A549 (cell line): ENCODE measurements at regions of chr17 and their contacts with region 1.

Region 1: DNA sequence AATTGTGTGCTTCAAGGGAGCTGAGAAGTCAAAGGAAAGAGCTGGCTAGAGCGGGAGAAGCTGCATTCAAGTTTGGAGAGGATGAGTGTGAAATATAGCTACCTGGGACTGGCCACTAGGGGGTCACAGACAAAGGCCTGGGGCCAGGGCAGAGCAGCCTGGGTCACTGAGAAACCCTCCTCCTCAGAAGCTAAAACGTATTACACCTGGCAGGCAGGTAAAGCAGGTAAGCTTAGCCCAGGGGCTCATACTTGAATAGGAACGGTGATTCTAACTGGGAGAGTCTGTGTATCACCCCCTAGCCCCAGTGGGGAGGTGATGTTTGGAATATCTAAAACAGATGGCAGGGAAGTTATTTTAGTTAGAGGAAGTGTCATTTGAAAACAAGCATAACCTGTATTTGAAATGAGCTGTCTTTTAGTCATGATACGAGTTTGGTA is 6.8 kb downstream of the KRT37 start:
- DNase-seq: peak in 1 of 2 experiments; percentile 67
- ATAC-seq: peak; percentile 62 to 91; a peak in 4 of 6 replicates
- H3K4me3 ChIP-seq: no peak overlapping the region
- H3K27ac ChIP-seq: no peak overlapping the region
- H3K4me1 ChIP-seq: 0 out of 3 replicates have a peak, but pooled peaks cover 4% of the 10 kb centered on the region
- CTCF ChIP-seq: peak; percentile 36; the same call in 2 of the 3 replicates
- EP300 ChIP-seq: no peak
- POLR2A ChIP-seq: no peak
- RAD21 ChIP-seq: peak in 1 of 2 experiments; percentile 50; a peak in 2 of 5 replicates

Region 2: DNA sequence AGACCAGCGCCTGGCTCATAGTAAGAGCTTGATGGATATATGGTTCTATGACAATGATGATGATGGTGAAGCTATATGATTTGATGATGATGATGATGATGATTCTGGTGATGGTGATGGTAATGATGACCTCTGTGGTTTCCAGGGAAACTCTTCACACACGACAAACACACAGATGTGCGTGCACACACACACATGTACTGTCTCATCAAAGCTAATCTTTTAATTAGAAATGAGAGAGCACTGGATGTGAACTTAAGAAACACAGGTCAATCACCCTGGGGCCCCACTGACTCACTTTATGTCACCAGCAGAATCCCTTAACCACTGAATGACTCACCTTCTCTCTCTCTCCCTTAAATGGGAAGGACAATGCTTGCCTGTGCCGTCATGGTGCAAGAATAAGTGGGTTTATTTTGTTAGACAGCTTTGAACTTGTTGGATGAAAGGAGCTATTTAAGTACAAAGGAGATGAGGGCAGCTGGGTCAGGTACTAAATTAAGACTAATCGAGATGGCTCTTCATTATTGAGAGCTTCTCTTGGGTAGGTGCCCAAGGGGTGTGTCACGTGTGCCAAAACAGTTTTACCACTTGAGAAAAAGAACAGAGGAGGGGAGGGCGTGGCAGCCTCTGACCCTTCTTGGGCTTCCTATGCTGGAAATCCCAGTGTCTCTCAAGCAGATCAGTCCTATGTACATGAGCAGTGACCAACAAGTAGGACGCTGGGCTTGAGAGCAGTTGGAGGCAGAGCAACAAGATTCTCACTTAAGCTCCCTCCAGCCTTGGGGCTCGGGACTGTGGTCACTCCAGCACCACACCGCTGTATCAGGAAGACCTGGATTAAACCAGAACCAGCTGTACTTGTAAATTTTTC is 13.6 kb before region 1 on chr17:
- CTCF ChIA-PET with region 1: interaction called, 46 read pairs
- POLR2A ChIA-PET with region 1: no interaction called
- DNase-seq: peak; percentile 77 to 82
- ATAC-seq: peak; percentile 75 to 81; a peak in 5 of 6 replicates
- H3K4me3 ChIP-seq: no peak overlapping the region
- H3K27ac ChIP-seq: peak overlapping the region; percentile 34 to 66; a peak in 5 of 6 replicates
- H3K4me1 ChIP-seq: peaks cover 18% of the 10 kb centered on the region
- CTCF ChIP-seq: no peak
- EP300 ChIP-seq: peak in 1 of 2 experiments; percentile 46; a peak in 1 of 5 replicates
- POLR2A ChIP-seq: no peak
- RAD21 ChIP-seq: no peak

Region 3: GRCh38 chr17:41467561-41467960 is 50.0 kb after region 1 on chr17:
- CTCF ChIA-PET with region 1: no interaction called
- POLR2A ChIA-PET with region 1: no interaction called
- DNase-seq: no peak
- ATAC-seq: no peak
- H3K4me3 ChIP-seq: no peak overlapping the region
- H3K27ac ChIP-seq: no peak overlapping the region
- H3K4me1 ChIP-seq: peaks cover 13% of the 10 kb centered on the region
- CTCF ChIP-seq: no peak
- EP300 ChIP-seq: no peak
- POLR2A ChIP-seq: no peak
- RAD21 ChIP-seq: no peak